ENCODE measurements at regions of chr14 and their contacts with region 1.

Region 1: DNA sequence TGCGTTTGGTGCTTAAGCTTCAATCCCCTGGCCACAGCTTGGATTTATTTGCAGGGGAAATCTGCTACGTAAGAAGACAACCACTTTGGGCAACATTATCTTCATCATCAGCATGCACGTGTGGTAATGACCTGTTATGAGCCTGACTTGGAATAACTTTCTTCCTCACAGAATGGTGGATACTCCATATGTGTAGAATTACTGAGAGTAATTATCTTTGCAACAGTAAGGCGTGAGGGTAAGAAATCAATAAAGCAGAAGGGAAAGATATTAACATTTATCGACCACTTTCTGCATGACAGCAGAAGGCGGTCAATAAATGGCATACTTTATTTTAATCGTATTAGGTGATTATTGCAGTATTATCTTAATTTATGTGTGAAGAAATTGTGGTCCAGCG is 152.7 kb downstream of the RGS6 start:
- DNase-seq: no peak
- ATAC-seq: no peak
- H3K4me3 ChIP-seq: no peak overlapping the region
- H3K27ac ChIP-seq: no peak overlapping the region
- H3K4me1 ChIP-seq: no peaks in the 10 kb centered on the region
- H3K27me3 ChIP-seq: no peaks in the 10 kb centered on the region; a peak in 1 of 4 replicates
- CTCF ChIP-seq: no peak
- EP300 ChIP-seq: no peak
- POLR2A ChIP-seq: no peak
- RAD21 ChIP-seq: no peak

Region 2: DNA sequence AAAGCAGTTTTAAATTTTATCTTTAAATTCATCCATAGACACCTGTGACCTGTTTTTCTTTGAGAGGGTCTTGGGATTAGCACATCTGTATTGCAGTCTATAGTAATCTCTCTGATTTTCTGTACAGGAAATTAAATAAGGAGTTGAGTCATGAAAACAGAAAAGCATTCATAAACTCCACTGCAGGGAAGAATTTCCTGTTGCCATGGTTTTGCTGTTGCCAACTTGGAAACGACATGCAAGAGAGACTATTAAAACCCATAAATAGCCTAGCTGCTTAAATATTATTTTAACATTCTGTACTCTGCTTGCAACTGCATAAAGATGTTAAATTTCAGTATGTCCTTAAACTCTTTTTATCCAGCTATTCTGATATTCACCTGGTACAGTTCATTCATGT is 433.7 kb before region 1 on chr14:
- CTCF ChIA-PET with region 1: no interaction called
- POLR2A ChIA-PET with region 1: no interaction called
- RAD21 ChIA-PET with region 1: no interaction called
- SMC1A ChIA-PET with region 1: no interaction called
- in situ Hi-C with region 1: no loop called
- intact Hi-C with region 1: no loop called
- DNase-seq: no peak
- ATAC-seq: no peak
- H3K4me3 ChIP-seq: no peak overlapping the region
- H3K27ac ChIP-seq: no peak overlapping the region
- H3K4me1 ChIP-seq: no peaks in the 10 kb centered on the region
- H3K27me3 ChIP-seq: no peaks in the 10 kb centered on the region
- CTCF ChIP-seq: no peak
- EP300 ChIP-seq: no peak
- POLR2A ChIP-seq: no peak
- RAD21 ChIP-seq: no peak

Region 3: DNA sequence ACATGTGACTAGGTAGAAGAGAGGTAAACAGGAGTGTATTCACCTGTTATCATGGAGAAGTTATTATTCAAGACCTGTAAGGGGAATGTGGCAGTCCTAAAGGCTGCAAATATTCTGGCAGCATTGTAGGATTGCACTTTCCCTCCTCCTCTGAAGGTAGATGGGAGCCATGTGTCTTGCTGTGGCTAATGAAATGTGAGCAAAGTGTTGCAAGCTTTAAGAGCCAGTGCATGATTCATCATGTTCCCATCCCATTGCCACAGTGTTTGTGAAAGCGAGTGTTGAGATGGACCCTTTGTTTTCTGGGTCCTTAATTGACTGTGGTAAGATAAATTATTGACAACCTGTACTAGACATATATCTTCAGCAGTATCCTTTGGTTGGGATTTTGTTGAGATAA is 24.0 kb before region 1 on chr14:
- CTCF ChIA-PET with region 1: no interaction called
- POLR2A ChIA-PET with region 1: no interaction called
- RAD21 ChIA-PET with region 1: interaction called, 3 read pairs
- SMC1A ChIA-PET with region 1: interaction called, 10 read pairs
- in situ Hi-C with region 1: no loop called
- intact Hi-C with region 1: no loop called
- DNase-seq: no peak
- ATAC-seq: no peak
- H3K4me3 ChIP-seq: no peak overlapping the region
- H3K27ac ChIP-seq: no peak overlapping the region
- H3K4me1 ChIP-seq: no peaks in the 10 kb centered on the region
- H3K27me3 ChIP-seq: no peaks in the 10 kb centered on the region
- CTCF ChIP-seq: no peak
- EP300 ChIP-seq: no peak
- POLR2A ChIP-seq: no peak
- RAD21 ChIP-seq: no peak

Region 4: DNA sequence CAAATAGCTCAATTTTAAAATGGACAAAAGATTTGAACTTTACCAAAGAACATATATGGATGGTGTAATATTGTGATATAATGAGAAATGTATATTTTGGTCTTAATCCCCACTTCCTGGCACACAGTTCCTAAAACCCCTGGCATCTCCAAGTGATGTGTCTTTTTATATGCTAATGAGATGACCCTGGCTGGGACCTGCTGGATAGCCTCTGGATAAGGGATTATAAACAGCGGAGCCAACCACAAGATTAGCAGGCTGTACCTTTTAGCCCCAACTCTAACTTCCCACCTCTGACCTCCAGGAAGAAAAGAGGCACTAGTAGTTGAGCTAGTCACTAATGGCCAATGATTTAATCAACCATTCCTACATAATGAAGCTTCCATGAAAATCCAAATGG is 679.0 kb after region 1 on chr14:
- CTCF ChIA-PET with region 1: no interaction called
- POLR2A ChIA-PET with region 1: no interaction called
- RAD21 ChIA-PET with region 1: no interaction called
- SMC1A ChIA-PET with region 1: no interaction called
- in situ Hi-C with region 1: no loop called
- intact Hi-C with region 1: no loop called
- DNase-seq: no peak
- ATAC-seq: no peak
- H3K4me3 ChIP-seq: no peak overlapping the region
- H3K27ac ChIP-seq: no peak overlapping the region
- H3K4me1 ChIP-seq: no peaks in the 10 kb centered on the region
- H3K27me3 ChIP-seq: no peaks in the 10 kb centered on the region
- CTCF ChIP-seq: no peak
- EP300 ChIP-seq: no peak
- POLR2A ChIP-seq: no peak
- RAD21 ChIP-seq: no peak

Measured in GM12878 (cell line).